ENCODE measurements at regions of chr2 and their contacts with region 1.

Region 1: GRCh38 chr2:151422917-151423439 is 13.3 kb downstream of the RIF1 start:
- DNase-seq: no peak
- H3K4me3 Mint-ChIP-seq: no peak overlapping the region
- H3K27ac Mint-ChIP-seq: peak overlapping the region; percentile 74
- H3K4me1 Mint-ChIP-seq: peaks cover 39% of the 10 kb centered on the region
- H3K27me3 Mint-ChIP-seq: no peaks in the 10 kb centered on the region

Region 2: GRCh38 chr2:151409601-151410484 is 13.1 kb before region 1 on chr2 and contains the start of gene RIF1:
- CTCF ChIA-PET with region 1: no interaction called
- POLR2A ChIA-PET with region 1: interaction called, 3 read pairs
- intact Hi-C with region 1: loop called (anchors 1 kb)
- DNase-seq: peak; percentile 89
- H3K4me3 Mint-ChIP-seq: peak within 1 kb of the TSS; percentile 90
- H3K27ac Mint-ChIP-seq: peak within 1 kb of the TSS; percentile 83
- H3K4me1 Mint-ChIP-seq: peaks cover 24% of the 10 kb centered on the region
- H3K27me3 Mint-ChIP-seq: no peaks in the 10 kb centered on the region
- total RNA-seq, gene RIF1: 56.8 to 59.2 TPM

Region 3: DNA sequence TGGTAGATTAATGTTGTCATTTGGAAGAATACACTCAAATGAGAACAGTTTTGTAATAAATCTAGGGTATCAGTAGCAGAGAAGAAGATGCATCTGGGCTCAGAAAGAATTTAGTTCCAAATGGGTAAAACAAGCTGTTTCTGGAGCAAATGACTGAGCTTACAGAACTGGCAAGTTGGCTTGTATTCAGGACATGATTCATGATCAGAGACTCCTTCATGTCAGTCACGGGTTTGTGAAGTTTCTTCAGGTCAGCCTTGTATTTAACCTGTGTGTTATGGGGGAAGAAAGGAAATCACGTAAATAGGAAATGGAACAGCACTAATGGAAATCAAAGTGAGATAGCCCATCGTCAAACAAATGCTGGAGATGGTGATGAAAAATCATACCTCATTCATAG is 95.8 kb after region 1 on chr2:
- CTCF ChIA-PET with region 1: no interaction called
- POLR2A ChIA-PET with region 1: no interaction called
- intact Hi-C with region 1: no loop called
- DNase-seq: no peak
- H3K4me3 Mint-ChIP-seq: no peak overlapping the region
- H3K27ac Mint-ChIP-seq: no peak overlapping the region
- H3K4me1 Mint-ChIP-seq: no peaks in the 10 kb centered on the region
- H3K27me3 Mint-ChIP-seq: no peaks in the 10 kb centered on the region

Measured in activated CD4-positive, alpha-beta memory T cell treated with anti-CD3 and anti-CD28 coated beads for 36 hours (primary cell).